Aorta (tissue), 5 donors: ENCODE measurements at regions of chr14 and their contacts with region 1.

Region 1: GRCh38 chr14:23141671-23142451 is 22.8 kb upstream of the CEBPE start:
- DNase-seq: peak; percentile 80 to 94
- ATAC-seq: peak; percentile 76
- H3K4me3 ChIP-seq: no peak overlapping the region
- H3K27ac ChIP-seq: peak overlapping the region; percentile 58 to 80
- H3K4me1 ChIP-seq: no peaks in the 10 kb centered on the region
- H3K27me3 ChIP-seq: no peaks in the 10 kb centered on the region

Region 2: GRCh38 chr14:22882529-22883172 is 259.2 kb before region 1 on chr14:
- intact Hi-C with region 1: no loop called
- DNase-seq: no peak
- ATAC-seq: no peak
- H3K4me3 ChIP-seq: no peak overlapping the region
- H3K27ac ChIP-seq: no peak overlapping the region
- H3K4me1 ChIP-seq: no peaks in the 10 kb centered on the region
- H3K27me3 ChIP-seq: no peaks in the 10 kb centered on the region

Region 3: DNA sequence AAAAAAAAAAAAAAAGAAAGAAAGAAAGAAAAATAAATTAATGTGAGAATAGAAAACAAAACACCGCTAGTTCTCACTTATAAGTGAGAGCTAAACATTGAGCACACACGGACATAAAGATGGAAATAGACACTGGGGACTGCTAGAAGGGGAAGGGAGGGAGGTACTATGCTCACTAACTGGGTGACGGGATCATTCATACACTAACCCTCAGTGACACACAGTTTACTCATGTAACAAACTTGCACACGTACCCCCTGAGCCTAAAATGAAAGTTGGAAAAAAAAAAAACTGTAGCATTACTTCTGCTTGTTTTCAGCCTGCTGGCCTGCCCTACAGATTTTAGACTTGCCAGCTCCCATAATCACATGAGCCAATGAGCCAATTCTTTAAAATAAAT is 202.2 kb before region 1 on chr14:
- intact Hi-C with region 1: no loop called
- DNase-seq: no peak
- ATAC-seq: no peak
- H3K4me3 ChIP-seq: no peak overlapping the region
- H3K27ac ChIP-seq: no peak overlapping the region
- H3K4me1 ChIP-seq: no peaks in the 10 kb centered on the region
- H3K27me3 ChIP-seq: no peaks in the 10 kb centered on the region

Region 4: DNA sequence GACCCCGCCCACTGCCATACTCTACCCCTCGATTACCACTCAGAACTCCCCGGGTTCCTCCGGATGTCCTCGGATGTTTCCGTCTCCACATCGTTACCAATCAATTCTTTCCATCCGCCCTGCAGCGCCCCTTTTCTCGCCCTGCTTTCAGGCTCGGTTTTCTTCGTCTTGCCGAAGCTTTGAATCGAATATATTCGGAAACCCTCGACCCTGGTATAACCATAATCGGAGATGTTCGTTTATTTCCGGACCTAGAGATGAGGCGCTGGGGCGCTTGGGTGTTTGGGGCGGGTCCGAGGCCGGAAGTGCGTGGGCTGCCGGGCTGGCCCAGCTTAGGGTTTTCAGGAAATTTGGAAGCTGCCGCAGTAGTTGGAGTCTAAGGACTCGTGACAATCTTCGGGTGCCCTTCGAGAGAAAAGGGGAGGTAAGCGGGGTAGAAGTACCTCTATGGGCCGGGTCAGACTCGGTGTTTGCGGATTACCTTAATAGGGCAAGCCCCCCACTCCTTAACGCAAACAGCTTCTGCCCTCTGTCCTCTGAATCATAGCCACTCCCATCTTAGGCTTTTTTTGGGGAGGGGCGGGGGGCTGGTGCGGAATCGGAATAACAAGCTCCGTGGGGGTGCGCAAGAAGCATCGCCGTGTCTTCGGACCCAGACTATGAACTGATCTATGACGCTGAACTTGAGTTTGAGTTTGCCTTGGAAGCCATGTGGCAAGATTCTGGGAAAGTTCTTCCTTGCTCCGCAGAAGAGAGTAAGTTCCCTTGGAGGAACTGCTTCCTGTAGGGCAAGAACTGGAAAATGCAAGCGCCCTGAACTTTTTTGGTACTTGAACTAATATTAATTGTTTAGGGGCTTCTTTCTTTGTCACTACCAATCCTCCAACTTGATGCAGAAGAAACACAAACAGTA is 46.4 kb before region 1 on chr14 and contains the start of gene C14orf119:
- intact Hi-C with region 1: no loop called
- DNase-seq: peak; percentile 96 to 100
- ATAC-seq: peak; percentile 98
- H3K4me3 ChIP-seq: peak within 1 kb of the TSS; percentile 62 to 68
- H3K27ac ChIP-seq: peak within 1 kb of the TSS in 1 of 2 donors; percentile 92
- H3K4me1 ChIP-seq: peaks cover 0 to 11% of the 10 kb centered on the region in 2 donors
- H3K27me3 ChIP-seq: no peaks in the 10 kb centered on the region
- total RNA-seq, gene C14orf119: 37.6 to 41.4 TPM

Region 5: GRCh38 chr14:23186913-23187654 is 45.2 kb after region 1 on chr14:
- intact Hi-C with region 1: loop called in 1 of 2 experiments (anchors 5 kb)
- DNase-seq: no peak
- ATAC-seq: peak; percentile 80
- H3K4me3 ChIP-seq: no peak overlapping the region
- H3K27ac ChIP-seq: no peak overlapping the region
- H3K4me1 ChIP-seq: no peaks in the 10 kb centered on the region
- H3K27me3 ChIP-seq: no peaks in the 10 kb centered on the region